WTC11 (cell line): ENCODE measurements at regions of chr6 and their contacts with region 1.

Region 1: GRCh38 chr6:143940011-143940597 is 68.0 kb downstream of the PLAGL1 start:
- DNase-seq: peak; percentile 63
- ATAC-seq: peak; percentile 52
- H3K4me3 Mint-ChIP-seq: no peak overlapping the region
- H3K27ac Mint-ChIP-seq: no peak overlapping the region
- H3K4me1 Mint-ChIP-seq: peaks cover 43% of the 10 kb centered on the region
- H3K27me3 Mint-ChIP-seq: peaks cover 15% of the 10 kb centered on the region
- CTCF ChIP-seq: peak; percentile 55

Region 2: GRCh38 chr6:143811501-143812157 is 128.5 kb before region 1 on chr6:
- CTCF ChIA-PET with region 1: no interaction called
- POLR2A ChIA-PET with region 1: no interaction called
- DNase-seq: no peak
- ATAC-seq: no peak
- H3K4me3 Mint-ChIP-seq: no peak overlapping the region
- H3K27ac Mint-ChIP-seq: no peak overlapping the region
- H3K4me1 Mint-ChIP-seq: no peaks in the 10 kb centered on the region
- H3K27me3 Mint-ChIP-seq: no peaks in the 10 kb centered on the region
- CTCF ChIP-seq: no peak

Region 3: DNA sequence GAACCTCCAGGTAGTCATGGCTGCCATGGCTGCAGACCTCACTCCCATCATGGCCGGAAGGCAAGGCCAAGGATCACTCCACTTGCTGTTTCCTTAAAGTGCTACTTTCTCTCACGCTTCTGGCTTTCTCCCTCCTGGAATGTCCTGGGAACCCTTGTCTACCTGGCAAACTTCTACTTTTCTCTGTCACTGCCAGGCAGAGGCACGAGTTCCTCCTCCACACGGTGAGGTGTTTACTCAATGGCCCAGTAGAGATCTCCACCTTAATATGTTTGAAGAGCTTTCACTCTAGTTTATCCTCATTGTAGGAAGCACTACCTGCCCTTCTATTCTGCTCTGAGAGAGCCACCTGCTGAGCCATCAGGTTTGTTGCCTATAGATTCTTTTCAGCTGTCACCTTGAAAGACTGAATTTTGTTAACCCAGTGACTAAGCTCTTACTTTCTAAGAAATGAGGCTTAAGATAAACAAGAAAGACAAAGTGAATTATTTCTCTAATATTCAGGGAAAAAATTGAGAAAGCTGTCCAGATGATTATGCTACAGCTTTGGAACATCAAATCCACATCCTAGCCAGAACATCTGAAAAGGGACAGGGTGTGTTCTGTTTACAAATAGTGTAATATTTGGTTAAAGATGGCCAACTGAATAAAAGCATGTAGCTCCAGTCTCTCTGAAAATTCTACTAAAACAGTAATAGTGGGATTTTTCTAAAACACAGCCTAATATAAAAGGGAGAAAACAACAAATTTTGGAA is 13.0 kb after region 1 on chr6:
- CTCF ChIA-PET with region 1: interaction called, 87 read pairs
- POLR2A ChIA-PET with region 1: no interaction called
- DNase-seq: no peak
- ATAC-seq: no peak
- H3K4me3 Mint-ChIP-seq: no peak overlapping the region
- H3K27ac Mint-ChIP-seq: no peak overlapping the region
- H3K4me1 Mint-ChIP-seq: peaks cover 24% of the 10 kb centered on the region
- H3K27me3 Mint-ChIP-seq: peaks cover 45% of the 10 kb centered on the region
- CTCF ChIP-seq: no peak

Region 4: DNA sequence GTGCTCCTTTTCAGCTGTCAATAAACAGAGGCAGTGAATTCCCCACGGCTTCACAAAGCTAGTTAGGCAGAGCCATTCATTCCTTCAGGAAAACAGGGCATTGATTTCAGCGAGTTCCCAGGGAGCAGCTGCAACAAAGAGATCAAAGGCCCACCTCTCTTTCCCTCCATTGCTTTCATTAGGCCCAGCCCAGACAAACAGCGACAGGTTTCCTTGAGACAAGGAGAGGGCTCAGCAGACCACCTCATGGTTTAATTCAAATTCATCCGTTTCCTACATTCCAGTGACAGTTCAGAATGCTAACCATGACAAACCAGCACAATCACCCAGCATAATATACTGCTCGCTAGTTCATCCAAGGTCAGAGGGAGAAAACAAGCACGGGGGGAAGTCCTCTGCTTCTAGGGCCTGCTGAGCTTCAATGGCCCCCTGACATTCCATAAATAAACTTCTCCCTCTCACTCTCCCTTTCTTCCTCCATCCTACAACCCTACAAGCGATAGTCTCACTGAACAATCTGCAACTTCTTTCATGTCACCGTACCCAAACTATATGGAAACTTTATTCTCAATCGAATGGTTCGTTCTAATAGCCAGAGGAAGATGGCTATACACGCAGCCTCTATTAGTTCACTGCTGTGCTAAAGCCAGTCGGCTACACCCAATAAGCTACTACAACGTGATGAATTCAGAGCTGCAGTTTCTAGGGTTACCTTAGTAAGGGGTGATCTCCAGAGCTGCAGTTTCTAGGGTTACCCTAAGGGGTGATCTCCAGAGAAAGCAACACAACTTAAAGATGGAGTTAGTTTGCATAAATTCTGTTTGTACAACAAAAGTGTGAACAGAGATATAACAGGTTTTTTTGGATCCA is 33.2 kb after region 1 on chr6:
- CTCF ChIA-PET with region 1: interaction called, 14 read pairs
- POLR2A ChIA-PET with region 1: no interaction called
- DNase-seq: peak; percentile 60
- ATAC-seq: peak; percentile 91
- H3K4me3 Mint-ChIP-seq: peak overlapping the region; percentile 46
- H3K27ac Mint-ChIP-seq: peak overlapping the region; percentile 24
- H3K4me1 Mint-ChIP-seq: peaks cover 60% of the 10 kb centered on the region
- H3K27me3 Mint-ChIP-seq: peaks cover 58% of the 10 kb centered on the region; the same call in 1 of the 2 replicates
- CTCF ChIP-seq: no peak

Region 5: DNA sequence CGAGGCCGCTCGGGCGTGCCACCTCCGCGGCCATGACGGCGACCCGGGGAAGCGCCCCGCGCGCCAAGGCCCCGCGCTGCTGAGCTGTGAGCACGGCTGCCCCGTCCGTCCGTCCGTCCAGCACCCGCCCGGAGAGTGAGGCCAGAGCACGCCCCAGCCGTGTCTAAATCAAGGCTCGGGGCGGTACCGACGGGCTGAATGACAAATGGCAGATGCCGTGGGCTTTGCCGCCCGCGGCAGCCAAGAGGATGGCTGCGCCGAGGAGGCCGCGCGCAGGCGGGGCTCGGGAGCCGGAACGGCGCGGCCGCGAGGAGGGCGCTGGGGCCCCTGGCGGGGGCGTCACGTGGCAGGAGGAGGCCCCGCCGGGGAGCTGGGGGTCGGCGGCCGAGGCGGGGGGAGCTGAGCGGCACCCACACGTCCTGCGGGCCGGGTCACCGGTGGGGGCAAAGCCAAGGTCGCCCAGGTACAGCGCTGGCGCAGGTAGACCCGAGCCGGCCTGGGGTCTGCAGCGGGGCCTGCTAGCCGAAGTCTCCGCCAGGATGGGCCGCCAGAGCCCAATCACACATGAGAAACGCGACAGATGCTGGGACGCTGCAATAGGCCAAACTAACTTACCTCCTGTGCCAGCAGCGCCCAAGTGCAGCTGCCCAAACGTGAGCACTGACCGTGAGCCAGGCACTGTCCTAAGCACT is 68.2 kb after region 1 on chr6 and contains the start of gene PLAGL1:
- CTCF ChIA-PET with region 1: interaction called, 57 read pairs
- POLR2A ChIA-PET with region 1: no interaction called
- DNase-seq: peak; percentile 32
- ATAC-seq: peak; percentile 85
- H3K4me3 Mint-ChIP-seq: peak within 1 kb of the TSS; percentile 62
- H3K27ac Mint-ChIP-seq: no peak within 1 kb of the TSS
- H3K4me1 Mint-ChIP-seq: peaks cover 5% of the 10 kb centered on the region; the same call in 1 of the 2 replicates
- H3K27me3 Mint-ChIP-seq: peaks cover 79% of the 10 kb centered on the region
- CTCF ChIP-seq: no peak
- total RNA-seq, gene PLAGL1: 1.6 to 1.9 TPM (median 1.7 TPM) in 3 replicates

Region 6: GRCh38 chr6:144036064-144036834 is 96.1 kb after region 1 on chr6:
- CTCF ChIA-PET with region 1: interaction called, 21 read pairs
- POLR2A ChIA-PET with region 1: no interaction called
- DNase-seq: peak; percentile 15
- ATAC-seq: peak; percentile 60
- H3K4me3 Mint-ChIP-seq: no peak overlapping the region
- H3K27ac Mint-ChIP-seq: no peak overlapping the region
- H3K4me1 Mint-ChIP-seq: no peaks in the 10 kb centered on the region
- H3K27me3 Mint-ChIP-seq: no peaks in the 10 kb centered on the region; the same call in none of the 2 replicates
- CTCF ChIP-seq: no peak

Region 7: DNA sequence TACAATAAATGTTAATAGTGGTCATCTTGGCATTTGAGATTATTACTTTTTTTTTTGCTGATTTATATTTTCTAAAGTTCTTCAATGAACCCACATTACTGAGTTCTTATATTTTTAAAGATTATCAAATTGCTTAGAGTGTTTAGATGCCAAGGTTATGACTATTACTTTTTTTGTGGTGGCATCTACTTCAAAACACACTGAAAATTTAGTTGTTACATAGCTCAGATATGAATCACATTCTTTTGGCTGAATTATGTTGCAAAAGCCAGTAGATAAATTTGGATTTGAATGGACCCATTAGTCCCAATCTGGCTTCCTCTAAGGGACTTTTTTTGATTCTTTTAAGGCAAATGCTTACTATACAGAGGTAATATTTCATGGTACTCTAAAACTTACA is 353.9 kb after region 1 on chr6:
- CTCF ChIA-PET with region 1: no interaction called
- POLR2A ChIA-PET with region 1: no interaction called
- DNase-seq: no peak
- ATAC-seq: no peak
- H3K4me3 Mint-ChIP-seq: no peak overlapping the region
- H3K27ac Mint-ChIP-seq: no peak overlapping the region
- H3K4me1 Mint-ChIP-seq: peaks cover 19% of the 10 kb centered on the region
- H3K27me3 Mint-ChIP-seq: no peaks in the 10 kb centered on the region
- CTCF ChIP-seq: no peak